ENCODE measurements at regions of chrX and their contacts with region 1.

Region 1: GRCh38 chrX:39242187-39242586 is 440.9 kb downstream of the MID1IP1 start:
- DNase-seq: peak in 3 of 9 experiments; percentile 7 to 50 (median 36)
- ATAC-seq: no peak
- H3K4me3 ChIP-seq: no peak overlapping the region
- H3K4me3 Mint-ChIP-seq: no peak overlapping the region
- H3K27ac ChIP-seq: no peak overlapping the region
- H3K27ac Mint-ChIP-seq: no peak overlapping the region
- H3K4me1 ChIP-seq: no peaks in the 10 kb centered on the region
- H3K4me1 Mint-ChIP-seq: peaks cover 2% of the 10 kb centered on the region
- H3K27me3 ChIP-seq: no peaks in the 10 kb centered on the region
- H3K27me3 Mint-ChIP-seq: no peaks in the 10 kb centered on the region
- CTCF ChIP-seq: no peak

Region 2: GRCh38 chrX:38754102-38754790 is 487.9 kb before region 1 on chrX:
- CTCF ChIA-PET with region 1: interaction called, 3 read pairs
- POLR2A ChIA-PET with region 1: no interaction called
- intact Hi-C with region 1: loop called in 1 of 2 experiments (anchors 1 kb)
- DNase-seq: peak in 6 of 9 experiments; percentile 4 to 63 (median 17)
- ATAC-seq: no peak
- H3K4me3 ChIP-seq: no peak overlapping the region
- H3K4me3 Mint-ChIP-seq: no peak overlapping the region
- H3K27ac ChIP-seq: no peak overlapping the region
- H3K27ac Mint-ChIP-seq: no peak overlapping the region
- H3K4me1 ChIP-seq: no peaks in the 10 kb centered on the region
- H3K4me1 Mint-ChIP-seq: no peaks in the 10 kb centered on the region
- H3K27me3 ChIP-seq: no peaks in the 10 kb centered on the region
- H3K27me3 Mint-ChIP-seq: no peaks in the 10 kb centered on the region
- CTCF ChIP-seq: peak; percentile 61

Region 3: GRCh38 chrX:38768079-38768478 is 474.1 kb before region 1 on chrX:
- CTCF ChIA-PET with region 1: interaction called, 7 read pairs
- POLR2A ChIA-PET with region 1: no interaction called
- intact Hi-C with region 1: loop called (anchors 5 to 10 kb)
- DNase-seq: peak in 3 of 9 experiments; percentile 15 to 49 (median 37)
- ATAC-seq: no peak
- H3K4me3 ChIP-seq: no peak overlapping the region
- H3K4me3 Mint-ChIP-seq: no peak overlapping the region
- H3K27ac ChIP-seq: no peak overlapping the region
- H3K27ac Mint-ChIP-seq: no peak overlapping the region
- H3K4me1 ChIP-seq: no peaks in the 10 kb centered on the region
- H3K4me1 Mint-ChIP-seq: no peaks in the 10 kb centered on the region
- H3K27me3 ChIP-seq: no peaks in the 10 kb centered on the region
- H3K27me3 Mint-ChIP-seq: no peaks in the 10 kb centered on the region
- CTCF ChIP-seq: peak; percentile 37

Region 4: GRCh38 chrX:39162322-39162735 is 79.9 kb before region 1 on chrX:
- CTCF ChIA-PET with region 1: interaction called, 3 read pairs
- POLR2A ChIA-PET with region 1: no interaction called
- intact Hi-C with region 1: loop called (anchors 1 to 5 kb)
- DNase-seq: peak in 6 of 9 experiments; percentile 17 to 55 (median 46)
- ATAC-seq: peak; percentile 85
- H3K4me3 ChIP-seq: no peak overlapping the region
- H3K4me3 Mint-ChIP-seq: peak overlapping the region; percentile 67
- H3K27ac ChIP-seq: no peak overlapping the region
- H3K27ac Mint-ChIP-seq: no peak overlapping the region
- H3K4me1 ChIP-seq: no peaks in the 10 kb centered on the region
- H3K4me1 Mint-ChIP-seq: peaks cover 4% of the 10 kb centered on the region
- H3K27me3 ChIP-seq: peaks cover 0 to 3% of the 10 kb centered on the region in 2 experiments
- H3K27me3 Mint-ChIP-seq: peaks cover 3% of the 10 kb centered on the region
- CTCF ChIP-seq: peak; percentile 33

Region 5: DNA sequence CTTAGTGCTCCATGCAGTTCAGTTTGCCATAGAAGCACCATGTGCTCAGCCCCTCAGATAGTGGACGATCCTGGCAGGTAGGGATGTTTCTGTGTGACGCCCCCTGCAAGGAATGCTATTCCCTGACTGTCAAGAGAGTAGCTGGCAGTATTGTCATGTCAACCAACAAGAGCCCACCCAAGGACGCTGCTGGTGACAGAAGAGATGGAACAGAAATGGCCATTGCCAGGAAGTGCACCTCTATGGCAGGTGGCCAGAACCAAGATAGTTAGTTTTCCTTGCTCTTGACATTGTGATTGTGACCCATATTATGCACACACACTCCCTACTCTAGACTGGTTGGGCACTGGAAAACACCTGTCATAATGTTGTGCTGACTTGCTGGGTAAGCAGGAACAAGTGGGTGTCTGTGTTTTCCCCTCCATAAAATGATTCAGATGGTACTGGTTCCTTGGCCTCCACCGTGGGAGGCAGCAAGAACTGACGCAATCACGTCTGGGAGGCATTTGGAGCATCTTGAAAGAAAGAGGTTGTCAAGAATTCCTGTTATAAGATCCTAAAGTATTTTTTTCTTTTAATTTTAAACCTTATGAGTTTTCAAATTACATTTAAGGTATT is 66.9 kb after region 1 on chrX:
- CTCF ChIA-PET with region 1: no interaction called
- POLR2A ChIA-PET with region 1: no interaction called
- intact Hi-C with region 1: no loop called
- DNase-seq: peak in 5 of 9 experiments; percentile 13 to 74 (median 49)
- ATAC-seq: peak; percentile 79
- H3K4me3 ChIP-seq: no peak overlapping the region
- H3K4me3 Mint-ChIP-seq: no peak overlapping the region
- H3K27ac ChIP-seq: peak overlapping the region; percentile 58 to 80
- H3K27ac Mint-ChIP-seq: peak overlapping the region; percentile 98
- H3K4me1 ChIP-seq: peaks cover 46% of the 10 kb centered on the region
- H3K4me1 Mint-ChIP-seq: peaks cover 66% of the 10 kb centered on the region
- H3K27me3 ChIP-seq: no peaks in the 10 kb centered on the region
- H3K27me3 Mint-ChIP-seq: no peaks in the 10 kb centered on the region
- CTCF ChIP-seq: no peak

Region 6: GRCh38 chrX:39491548-39492297 is 249.5 kb after region 1 on chrX:
- CTCF ChIA-PET with region 1: no interaction called
- POLR2A ChIA-PET with region 1: no interaction called
- intact Hi-C with region 1: no loop called
- DNase-seq: peak; percentile 2 to 81 (median 45)
- ATAC-seq: peak; percentile 94
- H3K4me3 ChIP-seq: peak overlapping the region in 1 of 2 experiments; percentile 18
- H3K4me3 Mint-ChIP-seq: peak overlapping the region; percentile 51
- H3K27ac ChIP-seq: no peak overlapping the region
- H3K27ac Mint-ChIP-seq: peak overlapping the region; percentile 52
- H3K4me1 ChIP-seq: peaks cover 13% of the 10 kb centered on the region
- H3K4me1 Mint-ChIP-seq: peaks cover 26% of the 10 kb centered on the region
- H3K27me3 ChIP-seq: no peaks in the 10 kb centered on the region
- H3K27me3 Mint-ChIP-seq: no peaks in the 10 kb centered on the region
- CTCF ChIP-seq: no peak

Measured in CD8-positive, alpha-beta T cell (primary cell).